Activated T-helper 2 cell treated with anti-CD3 and anti-CD28 coated beads, Interferon-gamma antibody, Interleukin-2, Interleukin-4, amounts not matched to agents 10 μg/mL and 5 μg/mL and 100 μg/mL, durations not matched to agents 14 hours and 24 hours and 36 hours (primary cell): ENCODE measurements at regions of chr19 and their contacts with region 1.

Region 1: GRCh38 chr19:16628183-16628983 is at the start of gene MED26:
- DNase-seq: peak; percentile 91
- H3K4me3 Mint-ChIP-seq: peak within 1 kb of the TSS; percentile 98
- H3K27ac Mint-ChIP-seq: peak within 1 kb of the TSS; percentile 99
- H3K4me1 Mint-ChIP-seq: peaks cover 34% of the 10 kb centered on the region
- H3K27me3 Mint-ChIP-seq: no peaks in the 10 kb centered on the region
- total RNA-seq, gene MED26: 13.4 and 15.8 TPM in 2 replicates

Region 2: DNA sequence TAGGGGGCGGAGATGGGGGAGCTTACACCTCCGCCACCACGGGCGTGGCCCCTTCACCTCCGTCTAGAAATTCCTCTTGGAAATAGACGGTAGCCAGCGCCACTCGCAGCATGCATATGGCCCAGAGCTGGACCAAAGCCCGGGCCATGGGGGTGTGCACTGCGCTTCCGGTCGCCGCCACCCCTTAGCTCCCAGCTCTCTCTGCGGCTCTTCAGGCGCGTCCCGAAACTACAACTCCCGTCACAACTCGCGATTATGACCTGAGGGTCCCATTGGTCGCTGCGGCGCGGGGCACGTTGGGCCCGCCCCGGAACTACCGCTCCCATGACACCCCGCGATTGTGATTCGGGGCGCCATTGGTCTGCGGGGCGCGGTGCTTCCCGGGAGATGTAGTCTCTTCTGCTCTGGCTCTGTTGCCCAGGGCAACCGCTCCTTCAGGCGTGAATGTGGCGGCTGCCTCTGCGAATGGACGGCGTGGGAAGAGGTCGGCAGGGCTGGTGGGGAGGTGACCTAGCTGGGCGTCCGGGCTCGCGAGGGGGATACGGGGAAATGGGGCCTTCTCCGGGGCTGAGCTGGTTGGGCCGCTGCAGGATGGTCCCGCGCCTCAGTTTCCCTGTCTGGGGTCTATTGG is 132.3 kb before region 1 on chr19 and contains the starts of genes C19orf44 and CALR3:
- intact Hi-C with region 1: loop called (anchors 1 kb)
- DNase-seq: peak; percentile 98
- H3K4me3 Mint-ChIP-seq: peak within 1 kb of the TSS; percentile 91
- H3K27ac Mint-ChIP-seq: peak within 1 kb of the TSS; percentile 68
- H3K4me1 Mint-ChIP-seq: peaks cover 9% of the 10 kb centered on the region
- H3K27me3 Mint-ChIP-seq: no peaks in the 10 kb centered on the region
- total RNA-seq, gene C19orf44: 3.8 and 3.9 TPM in 2 replicates
- total RNA-seq, gene CALR3: not detected in 2 replicates

Region 3: GRCh38 chr19:16542045-16542909 is 86.1 kb before region 1 on chr19 and contains the start of gene CHERP:
- intact Hi-C with region 1: loop called (anchors 1 kb)
- DNase-seq: peak; percentile 93
- H3K4me3 Mint-ChIP-seq: peak within 1 kb of the TSS; percentile 99
- H3K27ac Mint-ChIP-seq: peak within 1 kb of the TSS; percentile 95
- H3K4me1 Mint-ChIP-seq: peaks cover 28% of the 10 kb centered on the region
- H3K27me3 Mint-ChIP-seq: no peaks in the 10 kb centered on the region
- total RNA-seq, gene CHERP: 79.1 and 82.3 TPM in 2 replicates

Region 4: GRCh38 chr19:16572332-16573211 is 55.8 kb before region 1 on chr19 and contains the start of gene SLC35E1:
- intact Hi-C with region 1: loop called (anchors 1 kb)
- DNase-seq: peak; percentile 92
- H3K4me3 Mint-ChIP-seq: peak within 1 kb of the TSS; percentile 97
- H3K27ac Mint-ChIP-seq: peak within 1 kb of the TSS; percentile 93
- H3K4me1 Mint-ChIP-seq: peaks cover 39% of the 10 kb centered on the region
- H3K27me3 Mint-ChIP-seq: no peaks in the 10 kb centered on the region
- total RNA-seq, gene SLC35E1: 55.3 and 56.0 TPM in 2 replicates

Region 5: DNA sequence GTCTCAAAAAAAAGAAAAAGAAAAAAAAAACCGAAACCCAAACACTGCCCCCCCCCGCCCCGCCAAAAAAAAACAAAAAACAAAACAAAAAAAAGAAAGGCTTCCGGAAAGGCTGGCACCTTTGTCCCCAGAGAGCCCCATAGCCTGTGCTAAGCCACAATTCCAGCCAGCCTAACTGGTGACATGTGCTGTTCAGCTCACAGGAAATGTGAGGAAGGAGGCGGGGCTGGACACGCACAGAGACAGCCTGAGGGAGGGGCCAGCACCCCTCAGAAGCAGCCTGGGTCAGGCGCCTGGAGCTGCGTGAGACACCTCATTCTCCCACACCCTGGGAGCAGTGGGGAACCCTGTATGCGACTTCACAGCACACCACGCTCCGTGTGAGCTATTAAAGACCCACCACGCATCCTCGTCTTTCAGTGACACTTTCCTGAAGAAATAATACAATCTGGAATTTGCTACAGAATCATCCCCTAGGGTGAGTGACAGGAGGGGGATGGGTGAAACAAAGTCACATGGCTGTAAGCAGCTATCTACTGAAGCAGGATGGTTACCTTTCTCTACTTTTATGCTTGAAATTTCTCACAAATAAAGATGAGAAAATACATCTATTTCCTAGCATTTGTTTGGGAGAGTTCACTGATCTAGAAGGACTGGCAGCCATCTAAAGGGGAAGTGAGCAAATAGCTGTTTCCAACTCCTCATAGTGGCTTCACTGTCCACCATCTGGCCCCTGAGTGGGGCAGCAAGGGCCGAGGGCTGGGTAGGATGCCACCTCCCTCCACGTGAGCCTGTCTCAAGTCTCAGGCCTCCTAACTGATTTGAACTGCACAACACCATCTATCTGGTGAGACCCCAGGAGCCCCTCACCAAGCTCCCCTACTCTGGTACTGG is 43.9 kb before region 1 on chr19:
- intact Hi-C with region 1: loop called (anchors 1 kb)
- DNase-seq: peak; percentile 88
- H3K4me3 Mint-ChIP-seq: peak overlapping the region; percentile 77
- H3K27ac Mint-ChIP-seq: peak overlapping the region; percentile 90
- H3K4me1 Mint-ChIP-seq: peaks cover 66% of the 10 kb centered on the region
- H3K27me3 Mint-ChIP-seq: no peaks in the 10 kb centered on the region

Region 6: GRCh38 chr19:16659831-16660708 is 31.7 kb after region 1 on chr19 and contains the start of gene SMIM7:
- intact Hi-C with region 1: loop called (anchors 1 kb)
- DNase-seq: peak; percentile 98
- H3K4me3 Mint-ChIP-seq: peak within 1 kb of the TSS; percentile 97
- H3K27ac Mint-ChIP-seq: peak within 1 kb of the TSS; percentile 96
- H3K4me1 Mint-ChIP-seq: peaks cover 32% of the 10 kb centered on the region
- H3K27me3 Mint-ChIP-seq: no peaks in the 10 kb centered on the region
- total RNA-seq, gene SMIM7: 60.3 and 60.9 TPM in 2 replicates

Region 7: DNA sequence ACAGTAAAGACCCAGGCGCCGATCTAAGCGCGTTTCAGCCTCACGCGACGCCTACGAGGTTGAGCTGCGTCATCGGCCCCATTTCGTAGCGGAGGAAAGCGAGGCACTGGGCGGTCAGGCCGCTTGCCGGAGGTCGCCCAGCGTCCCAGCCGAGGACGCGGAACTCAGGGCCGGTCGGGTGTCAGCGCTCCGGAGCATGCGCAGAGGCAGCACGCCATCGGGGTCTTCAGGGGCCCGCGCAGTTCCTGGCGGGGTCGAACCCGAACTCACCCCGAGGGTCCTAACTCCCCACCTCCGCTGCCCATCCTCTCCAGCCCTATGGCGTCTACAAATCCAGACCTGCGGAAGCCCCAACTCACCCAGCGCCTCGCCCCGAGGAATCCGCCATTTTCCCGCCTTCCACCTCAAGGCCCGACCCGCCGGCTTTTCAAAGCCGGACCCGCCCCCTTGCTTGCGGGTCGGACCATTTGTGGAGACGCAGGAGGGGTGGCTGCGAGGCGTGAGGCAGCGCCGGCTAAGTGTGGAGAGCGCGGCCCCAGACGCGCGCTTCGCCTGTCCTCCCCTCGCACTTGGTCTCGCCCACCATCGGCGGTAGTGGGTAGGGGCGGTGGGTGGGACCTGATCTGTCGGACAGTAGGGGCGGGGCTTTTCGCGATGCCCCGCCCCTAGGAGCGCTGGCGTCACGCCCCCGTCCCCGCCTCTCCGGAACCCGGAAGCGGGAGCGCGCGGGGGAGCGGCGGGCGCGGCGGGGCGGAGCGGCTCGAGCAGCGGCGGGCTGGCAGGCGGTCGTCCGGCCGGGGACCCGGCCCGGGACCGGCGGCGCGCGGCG is 446.9 kb after region 1 on chr19 and contains the starts of genes HAUS8 and MYO9B:
- intact Hi-C with region 1: loop called (anchors 1 kb)
- DNase-seq: peak; percentile 100
- H3K4me3 Mint-ChIP-seq: peak within 1 kb of the TSS; percentile 99
- H3K27ac Mint-ChIP-seq: peak within 1 kb of the TSS; percentile 97
- H3K4me1 Mint-ChIP-seq: peaks cover 52% of the 10 kb centered on the region
- H3K27me3 Mint-ChIP-seq: no peaks in the 10 kb centered on the region
- total RNA-seq, gene HAUS8: 27.8 and 28.8 TPM in 2 replicates
- total RNA-seq, gene MYO9B: 143 TPM in 2 replicates